ENCODE measurements at regions of chr2 and their contacts with region 1.

Region 1: GRCh38 chr2:10048501-10049171 is 5.3 kb downstream of the KLF11 start:
- DNase-seq: peak in 10 of 42 donors; percentile 16 to 64 (median 42)

Region 2: GRCh38 chr2:9813312-9814133 is 235.1 kb before region 1 on chr2:
- intact Hi-C with region 1: loop called (anchors 5 kb)
- DNase-seq: peak; percentile 47 to 88 (median 75)

Region 3: GRCh38 chr2:9984217-9984739 is 64.4 kb before region 1 on chr2:
- intact Hi-C with region 1: loop called (anchors 5 kb)
- DNase-seq: peak in 2 of 42 donors; percentile 26 to 41

Region 4: GRCh38 chr2:10157293-10157692 is 108.7 kb after region 1 on chr2:
- intact Hi-C with region 1: no loop called
- DNase-seq: no peak